Mammary epithelial cell (primary cell): ENCODE measurements at regions of chr1 and their contacts with region 1.

Region 1: DNA sequence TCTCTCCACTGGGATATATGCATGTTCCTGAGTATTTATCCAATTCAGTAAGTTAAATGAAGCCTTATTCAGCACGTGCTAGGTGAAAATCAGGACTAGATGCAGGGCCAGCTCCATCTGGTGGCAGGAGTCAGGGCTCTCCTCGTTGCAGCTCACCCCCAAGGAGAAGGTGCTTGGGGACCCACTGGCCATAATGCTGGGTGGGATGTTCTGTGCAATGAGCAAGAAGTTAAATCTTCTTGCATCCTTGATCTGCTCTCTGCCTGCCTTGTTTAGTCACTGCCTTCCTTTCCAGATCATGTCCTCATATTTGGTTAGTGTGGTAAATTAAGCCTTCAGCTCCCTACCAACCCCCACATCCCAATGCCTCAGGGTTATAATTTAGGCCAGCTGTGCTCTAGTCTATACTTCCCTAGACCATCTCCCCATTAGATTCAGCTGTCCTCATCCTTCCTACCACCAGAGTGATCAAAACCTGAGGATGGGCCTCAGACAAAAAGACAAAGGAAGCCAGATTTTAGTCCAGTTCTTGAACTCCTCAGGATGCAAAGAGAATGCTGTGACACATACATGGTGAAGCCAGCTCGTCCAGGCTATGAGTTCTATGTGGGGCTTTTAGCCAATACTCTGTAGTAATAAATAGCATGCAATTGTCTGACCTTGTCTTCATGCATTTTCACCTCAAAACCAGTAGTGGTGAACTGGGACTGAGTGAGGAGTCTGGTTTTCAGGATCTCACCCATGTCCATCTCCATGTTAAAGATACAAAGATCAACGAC is 55.9 kb downstream of the SEC16B start:
- DNase-seq: peak; percentile 32
- H3K4me3 ChIP-seq: no peak overlapping the region
- H3K27ac ChIP-seq: no peak overlapping the region
- H3K4me1 ChIP-seq: peaks cover 31% of the 10 kb centered on the region
- H3K27me3 ChIP-seq: no peaks in the 10 kb centered on the region
- CTCF ChIP-seq: peak; percentile 68 to 79

Region 2: DNA sequence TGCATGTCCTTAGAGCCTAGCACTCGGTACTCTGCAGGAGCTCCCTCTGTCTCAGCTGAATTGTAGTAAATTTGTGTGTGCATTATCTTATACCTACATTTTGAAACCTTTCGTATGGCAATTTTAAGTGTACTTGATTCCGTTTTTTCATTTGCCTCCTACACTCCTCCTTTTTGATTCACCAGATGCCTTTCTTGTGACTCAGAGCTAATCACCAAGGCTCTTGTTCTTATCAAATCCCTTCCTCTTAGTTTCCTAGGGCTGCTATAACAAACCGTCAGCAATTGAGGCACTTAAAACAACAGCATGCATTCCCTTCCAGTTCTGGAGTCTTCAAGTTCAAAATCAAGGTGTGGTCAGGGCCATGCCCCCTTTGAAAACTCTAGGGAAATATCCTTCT is 1010.5 kb before region 1 on chr1:
- CTCF ChIA-PET with region 1: no interaction called
- dilution Hi-C with region 1: loop called (anchors 25 kb)
- in situ Hi-C with region 1: no loop called
- intact Hi-C with region 1: no loop called
- DNase-seq: peak; percentile 32
- H3K4me3 ChIP-seq: no peak overlapping the region
- H3K27ac ChIP-seq: no peak overlapping the region
- H3K4me1 ChIP-seq: no peaks in the 10 kb centered on the region
- H3K27me3 ChIP-seq: no peaks in the 10 kb centered on the region
- CTCF ChIP-seq: no peak

Region 3: DNA sequence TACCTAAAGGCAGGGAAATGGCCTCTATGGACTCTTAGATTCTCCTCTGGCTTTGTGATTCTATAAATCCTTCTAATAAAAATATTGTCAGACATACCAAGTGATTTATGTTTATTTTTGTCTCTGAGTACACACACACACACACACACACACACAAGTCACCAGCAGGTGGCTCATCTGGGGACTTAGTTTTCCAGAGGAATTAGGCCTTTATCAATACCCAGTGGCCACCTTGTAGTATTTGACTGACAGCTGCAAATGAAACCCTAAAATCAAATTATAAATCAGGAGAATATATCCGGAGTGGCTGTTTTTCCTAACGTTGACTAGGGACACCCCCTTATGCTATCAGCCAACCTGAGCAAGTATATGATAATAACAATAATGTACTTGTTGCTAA is 484.7 kb before region 1 on chr1:
- CTCF ChIA-PET with region 1: no interaction called
- dilution Hi-C with region 1: no loop called
- in situ Hi-C with region 1: no loop called
- intact Hi-C with region 1: loop called (anchors 10 kb)
- DNase-seq: no peak
- H3K4me3 ChIP-seq: no peak overlapping the region
- H3K27ac ChIP-seq: no peak overlapping the region
- H3K4me1 ChIP-seq: no peaks in the 10 kb centered on the region
- H3K27me3 ChIP-seq: no peaks in the 10 kb centered on the region
- CTCF ChIP-seq: peak in 1 of 2 donors; percentile 6

Region 4: DNA sequence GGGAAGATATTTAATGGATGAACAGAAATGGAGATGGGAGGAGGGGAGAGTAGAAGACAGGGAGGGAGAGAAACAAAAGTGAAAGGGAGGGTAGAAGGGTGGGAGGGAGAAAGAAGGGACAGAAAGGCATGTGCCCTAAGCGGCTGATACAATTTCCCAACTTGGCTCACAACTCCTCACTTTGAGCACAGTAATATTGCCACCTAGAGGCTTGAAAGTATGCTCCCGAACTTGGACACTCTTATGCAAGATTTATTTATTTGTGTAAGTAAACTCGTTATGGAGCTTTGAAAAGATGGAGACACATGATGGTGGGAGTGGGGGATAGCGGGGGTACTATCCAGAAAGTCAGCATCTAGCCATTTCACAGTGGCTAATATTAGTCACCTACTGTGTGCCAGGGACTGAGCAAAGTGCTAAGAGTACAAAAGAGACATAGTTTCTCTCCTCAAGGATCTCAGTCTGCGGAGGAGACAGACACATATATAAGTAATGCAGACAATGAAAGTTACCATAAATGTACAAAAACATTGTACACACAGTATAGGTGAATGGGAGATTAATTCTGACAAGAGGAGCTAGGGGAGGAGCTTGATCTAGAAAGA is 133.8 kb before region 1 on chr1:
- CTCF ChIA-PET with region 1: no interaction called
- dilution Hi-C with region 1: no loop called
- in situ Hi-C with region 1: no loop called
- intact Hi-C with region 1: loop called (anchors 1 kb)
- DNase-seq: peak; percentile 51
- H3K4me3 ChIP-seq: no peak overlapping the region
- H3K27ac ChIP-seq: no peak overlapping the region
- H3K4me1 ChIP-seq: no peaks in the 10 kb centered on the region
- H3K27me3 ChIP-seq: no peaks in the 10 kb centered on the region
- CTCF ChIP-seq: peak; percentile 49 to 71

Region 5: GRCh38 chr1:177858332-177858821 is 55.6 kb before region 1 on chr1:
- CTCF ChIA-PET with region 1: no interaction called
- dilution Hi-C with region 1: no loop called
- in situ Hi-C with region 1: no loop called
- intact Hi-C with region 1: loop called (anchors 5 kb)
- DNase-seq: no peak
- H3K4me3 ChIP-seq: no peak overlapping the region
- H3K27ac ChIP-seq: no peak overlapping the region
- H3K4me1 ChIP-seq: peaks cover 3% of the 10 kb centered on the region
- H3K27me3 ChIP-seq: no peaks in the 10 kb centered on the region
- CTCF ChIP-seq: no peak

Region 6: DNA sequence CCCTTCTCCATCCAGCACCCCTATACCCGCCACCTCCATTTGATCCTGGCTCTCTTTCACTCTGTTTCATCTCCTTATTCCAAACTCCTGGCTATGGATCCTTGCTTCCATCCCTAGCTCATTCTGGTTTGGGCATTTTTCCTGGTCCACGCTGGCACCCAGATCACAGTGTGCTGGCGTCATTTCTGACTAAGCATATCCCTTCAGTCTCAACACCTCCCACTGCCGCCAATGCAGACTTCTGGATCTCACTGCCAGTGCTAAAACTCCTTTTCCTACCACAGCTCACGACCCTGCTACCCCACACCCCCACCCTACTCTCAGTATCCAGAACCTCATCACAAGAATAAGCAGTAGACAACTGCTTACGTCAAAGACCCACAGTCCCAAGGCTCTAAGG is 39.6 kb after region 1 on chr1:
- CTCF ChIA-PET with region 1: no interaction called
- dilution Hi-C with region 1: no loop called
- in situ Hi-C with region 1: no loop called
- intact Hi-C with region 1: no loop called
- DNase-seq: no peak
- H3K4me3 ChIP-seq: no peak overlapping the region
- H3K27ac ChIP-seq: no peak overlapping the region
- H3K4me1 ChIP-seq: peaks cover 2% of the 10 kb centered on the region
- H3K27me3 ChIP-seq: no peaks in the 10 kb centered on the region
- CTCF ChIP-seq: no peak